Sigmoid colon (tissue), 7 donors: ENCODE measurements at regions of chr9 and their contacts with region 1.

Region 1: GRCh38 chr9:69199769-69200470 is 25.8 kb downstream of the TJP2 start:
- DNase-seq: no peak
- H3K4me3 ChIP-seq: no peak overlapping the region
- H3K27ac ChIP-seq: no peak overlapping the region
- H3K4me1 ChIP-seq: peaks cover 0 to 12% (median 11%) of the 10 kb centered on the region in 4 donors
- H3K27me3 ChIP-seq: no peaks in the 10 kb centered on the region
- CTCF ChIP-seq: no peak
- EP300 ChIP-seq: no peak
- POLR2A ChIP-seq: no peak

Region 2: DNA sequence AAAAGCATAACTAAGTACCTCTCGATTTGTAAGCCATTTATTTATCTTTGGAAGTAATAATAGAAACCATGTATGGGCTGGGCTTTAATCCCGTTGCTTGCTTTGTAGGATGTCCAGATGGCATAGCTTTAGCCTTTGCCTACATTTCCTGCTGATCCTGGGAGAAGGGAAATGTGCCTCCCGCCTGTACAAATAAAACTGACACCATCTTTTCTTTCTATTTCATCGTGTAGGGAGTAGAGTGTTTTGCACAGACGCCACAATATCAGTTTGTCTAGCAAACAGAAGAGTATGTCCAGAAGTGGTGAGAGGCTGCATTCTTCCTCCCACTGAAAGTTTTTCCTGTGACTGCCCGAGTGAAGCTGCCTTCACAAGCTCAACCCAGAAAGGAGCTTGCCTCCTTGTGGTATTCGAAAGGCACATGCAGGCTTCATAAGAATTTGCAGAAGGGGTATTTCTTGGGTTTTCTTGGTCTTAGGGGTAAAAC is 50.6 kb before region 1 on chr9:
- intact Hi-C with region 1: loop called (anchors 5 kb)
- DNase-seq: no peak
- H3K4me3 ChIP-seq: no peak overlapping the region
- H3K27ac ChIP-seq: peak overlapping the region in 2 of 4 donors; percentile 7 to 61
- H3K4me1 ChIP-seq: peaks cover 0 to 13% (median 6%) of the 10 kb centered on the region in 4 donors
- H3K27me3 ChIP-seq: no peaks in the 10 kb centered on the region
- CTCF ChIP-seq: peak in 1 of 4 experiments; percentile 24
- EP300 ChIP-seq: no peak
- POLR2A ChIP-seq: no peak

Region 3: GRCh38 chr9:69253057-69253456 is 53.1 kb after region 1 on chr9:
- intact Hi-C with region 1: loop called (anchors 10 kb)
- DNase-seq: no peak
- H3K4me3 ChIP-seq: no peak overlapping the region
- H3K27ac ChIP-seq: peak overlapping the region in 1 of 4 donors; percentile 38
- H3K4me1 ChIP-seq: no peaks in the 10 kb centered on the region
- H3K27me3 ChIP-seq: no peaks in the 10 kb centered on the region
- CTCF ChIP-seq: no peak
- EP300 ChIP-seq: no peak
- POLR2A ChIP-seq: no peak